ENCODE measurements at regions of chr16 and their contacts with region 1.

Region 1: DNA sequence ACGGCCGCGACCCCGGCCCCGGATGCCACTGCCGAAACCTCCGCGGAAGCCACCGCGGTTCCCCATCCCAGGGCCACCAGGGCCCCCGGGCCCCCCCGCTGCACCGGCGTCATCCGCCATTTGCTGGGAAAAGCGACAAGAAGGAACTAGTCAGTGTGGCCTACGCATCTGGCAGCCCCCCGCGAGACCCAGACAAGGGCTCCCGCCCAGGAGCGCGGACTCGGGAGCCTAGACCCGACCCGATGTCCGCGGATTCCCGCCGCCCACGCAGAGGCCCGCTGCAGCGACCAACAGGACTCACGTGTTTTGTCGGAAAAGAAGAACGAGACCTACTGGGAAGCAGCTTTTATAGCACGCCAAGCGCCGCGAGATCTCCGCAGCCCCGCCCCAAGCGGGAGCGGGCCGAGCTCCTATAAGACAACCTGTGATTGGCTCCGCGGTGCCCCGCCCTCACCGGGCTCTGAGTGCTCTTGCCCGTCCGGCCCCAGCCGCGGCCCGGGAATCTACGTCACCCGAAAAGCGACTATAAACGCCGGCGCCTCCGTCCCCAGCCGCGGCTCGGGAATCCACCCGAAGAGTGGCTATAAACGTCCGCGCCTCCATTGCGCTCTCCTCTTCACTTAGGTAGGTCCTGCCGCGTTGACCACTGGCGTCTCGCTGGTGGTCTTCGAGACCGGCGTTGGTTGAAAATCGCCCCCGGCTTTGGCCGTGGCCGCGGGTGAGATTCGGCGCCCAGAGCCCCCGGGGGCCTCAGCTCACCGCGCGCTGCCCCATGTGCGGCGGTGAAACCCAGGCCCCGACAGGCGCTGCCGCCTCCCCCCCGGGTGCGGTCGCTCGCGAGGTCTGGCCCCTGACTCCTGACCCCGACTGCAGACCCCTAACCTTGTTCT is at the start of gene RPS2:
- DNase-seq: peak; percentile 99
- H3K4me3 Mint-ChIP-seq: peak within 1 kb of the TSS; percentile 98
- H3K27ac Mint-ChIP-seq: peak within 1 kb of the TSS; percentile 94
- H3K4me1 Mint-ChIP-seq: peaks cover 30% of the 10 kb centered on the region
- H3K27me3 Mint-ChIP-seq: no peaks in the 10 kb centered on the region
- total RNA-seq, gene RPS2: 3,560 and 3,687 TPM in 2 replicates

Region 2: GRCh38 chr16:1991948-1992703 is 27.4 kb after region 1 on chr16:
- intact Hi-C with region 1: loop called (anchors 2 kb)
- DNase-seq: peak; percentile 90
- H3K4me3 Mint-ChIP-seq: peak overlapping the region; percentile 52
- H3K27ac Mint-ChIP-seq: peak overlapping the region; percentile 42
- H3K4me1 Mint-ChIP-seq: peaks cover 11% of the 10 kb centered on the region
- H3K27me3 Mint-ChIP-seq: peaks cover 10% of the 10 kb centered on the region

Region 3: GRCh38 chr16:2238838-2239675 is 274.3 kb after region 1 on chr16:
- intact Hi-C with region 1: no loop called
- DNase-seq: no peak
- H3K4me3 Mint-ChIP-seq: no peak overlapping the region
- H3K27ac Mint-ChIP-seq: no peak overlapping the region
- H3K4me1 Mint-ChIP-seq: no peaks in the 10 kb centered on the region
- H3K27me3 Mint-ChIP-seq: no peaks in the 10 kb centered on the region